ENCODE measurements at regions of chr5 and their contacts with region 1.

Region 1: GRCh38 chr5:58460732-58461286 is 923 bp upstream of the PLK2 start:
- DNase-seq: peak; percentile 94
- H3K4me3 Mint-ChIP-seq: peak overlapping the region; percentile 74
- H3K27ac Mint-ChIP-seq: no peak overlapping the region
- H3K4me1 Mint-ChIP-seq: peaks cover 15% of the 10 kb centered on the region
- H3K27me3 Mint-ChIP-seq: peaks cover 14% of the 10 kb centered on the region

Region 2: GRCh38 chr5:56909294-56910209 is 1551.3 kb before region 1 on chr5 and contains the start of gene SETD9:
- CTCF ChIA-PET with region 1: no interaction called
- POLR2A ChIA-PET with region 1: no interaction called
- intact Hi-C with region 1: loop called (anchors 5 kb)
- DNase-seq: peak; percentile 97
- H3K4me3 Mint-ChIP-seq: peak within 1 kb of the TSS; percentile 77
- H3K27ac Mint-ChIP-seq: peak within 1 kb of the TSS; percentile 94
- H3K4me1 Mint-ChIP-seq: peaks cover 20% of the 10 kb centered on the region
- H3K27me3 Mint-ChIP-seq: no peaks in the 10 kb centered on the region
- total RNA-seq, gene SETD9: 5.1 to 7.4 TPM

Region 3: GRCh38 chr5:57298295-57298984 is 1162.4 kb before region 1 on chr5:
- CTCF ChIA-PET with region 1: interaction called, 128 read pairs
- POLR2A ChIA-PET with region 1: interaction called, 5 read pairs
- intact Hi-C with region 1: loop called (anchors 1 kb)
- DNase-seq: peak; percentile 86
- H3K4me3 Mint-ChIP-seq: peak overlapping the region; percentile 43
- H3K27ac Mint-ChIP-seq: peak overlapping the region; percentile 54
- H3K4me1 Mint-ChIP-seq: peaks cover 39% of the 10 kb centered on the region
- H3K27me3 Mint-ChIP-seq: no peaks in the 10 kb centered on the region

Region 4: DNA sequence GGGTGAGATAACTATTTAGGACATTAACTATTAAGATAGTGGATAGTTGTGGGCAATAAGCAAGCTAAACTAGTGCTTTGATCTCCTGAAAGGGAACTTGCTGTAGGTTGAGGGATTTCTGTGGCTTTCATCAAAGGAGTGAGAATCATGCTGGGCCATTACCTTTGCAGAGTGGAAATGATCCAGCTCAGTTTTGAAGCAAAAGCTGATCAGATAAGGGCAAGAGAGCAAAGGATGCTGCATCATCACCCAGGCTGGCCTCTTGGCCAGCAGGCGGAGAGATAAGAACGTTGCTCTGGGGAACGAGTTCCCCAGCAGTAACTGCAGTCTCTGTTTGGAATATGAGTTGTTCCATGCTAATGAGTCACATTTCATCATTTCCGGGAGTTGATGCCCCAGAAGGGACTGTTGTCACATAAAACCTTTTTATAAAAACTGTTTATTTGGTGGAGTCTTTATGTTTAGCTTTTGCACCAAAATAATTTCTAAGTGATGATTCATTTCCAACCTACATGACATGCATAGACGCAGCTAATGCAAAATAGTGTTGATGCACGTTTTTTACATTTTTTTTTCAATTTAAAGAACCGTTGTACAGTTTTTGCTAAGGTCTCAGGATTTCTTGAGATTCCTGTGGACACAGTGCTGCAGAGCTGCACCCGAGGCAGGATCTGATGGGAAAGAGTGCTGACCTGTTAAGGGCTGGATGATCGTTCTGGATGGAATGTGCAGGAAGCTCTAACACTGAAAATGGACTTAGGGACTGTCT is 1077.5 kb before region 1 on chr5:
- CTCF ChIA-PET with region 1: no interaction called
- POLR2A ChIA-PET with region 1: interaction called, 3 read pairs
- intact Hi-C with region 1: loop called (anchors 1 kb)
- DNase-seq: peak; percentile 73
- H3K4me3 Mint-ChIP-seq: peak overlapping the region; percentile 24
- H3K27ac Mint-ChIP-seq: peak overlapping the region; percentile 42
- H3K4me1 Mint-ChIP-seq: peaks cover 11% of the 10 kb centered on the region
- H3K27me3 Mint-ChIP-seq: peaks cover 1% of the 10 kb centered on the region

Region 5: GRCh38 chr5:57650360-57651069 is 810.3 kb before region 1 on chr5:
- CTCF ChIA-PET with region 1: interaction called, 24 read pairs
- POLR2A ChIA-PET with region 1: no interaction called
- intact Hi-C with region 1: loop called (anchors 2 kb)
- DNase-seq: peak; percentile 19
- H3K4me3 Mint-ChIP-seq: no peak overlapping the region
- H3K27ac Mint-ChIP-seq: no peak overlapping the region
- H3K4me1 Mint-ChIP-seq: no peaks in the 10 kb centered on the region
- H3K27me3 Mint-ChIP-seq: peaks cover 15% of the 10 kb centered on the region

Region 6: DNA sequence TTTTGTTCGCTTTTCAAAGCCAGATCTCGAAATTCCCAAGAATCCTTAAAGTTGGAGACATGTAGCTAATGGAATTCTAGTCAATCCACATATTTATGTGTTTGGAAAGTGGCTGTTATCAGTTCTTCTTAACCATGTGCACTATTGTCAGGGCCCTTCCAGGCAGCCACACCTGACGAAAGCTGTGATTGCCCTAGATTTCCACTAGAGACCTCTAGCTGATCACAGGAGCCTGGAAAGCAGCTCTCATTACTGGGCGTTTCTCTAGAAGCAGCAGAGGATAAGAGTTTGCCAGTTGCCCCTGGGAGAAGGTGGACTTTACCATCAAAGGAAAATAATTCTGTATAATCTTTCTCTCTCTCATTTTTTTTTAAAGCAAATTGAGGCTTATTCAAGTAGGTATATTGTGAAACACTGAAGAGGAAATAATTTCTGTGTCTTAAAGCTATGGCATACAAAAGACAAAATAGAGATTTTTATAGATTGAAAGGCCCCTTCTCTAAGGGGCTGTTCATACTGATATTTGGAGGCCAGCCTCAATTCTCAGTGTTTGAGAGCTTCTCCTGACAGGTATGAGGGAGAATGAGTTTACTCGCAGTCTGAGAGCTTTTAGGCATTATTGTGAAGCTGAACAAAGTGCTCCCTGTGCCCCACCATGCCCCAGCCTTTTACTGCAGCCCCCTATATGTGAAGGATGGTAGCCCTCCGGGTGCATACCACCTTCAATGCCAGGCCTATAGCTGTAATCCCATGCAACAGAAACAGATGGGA is 572.8 kb before region 1 on chr5:
- CTCF ChIA-PET with region 1: no interaction called
- POLR2A ChIA-PET with region 1: no interaction called
- intact Hi-C with region 1: loop called (anchors 5 kb)
- DNase-seq: no peak
- H3K4me3 Mint-ChIP-seq: no peak overlapping the region
- H3K27ac Mint-ChIP-seq: no peak overlapping the region
- H3K4me1 Mint-ChIP-seq: no peaks in the 10 kb centered on the region
- H3K27me3 Mint-ChIP-seq: peaks cover 5% of the 10 kb centered on the region